ENCODE measurements at regions of chr17 and their contacts with region 1.

Region 1: GRCh38 chr17:46061435-46061834 is 62.4 kb downstream of the STH start:
- DNase-seq: no peak
- ATAC-seq: peak in 1 of 2 donors; percentile 27
- H3K4me3 ChIP-seq: no peak overlapping the region
- H3K27ac ChIP-seq: no peak overlapping the region
- H3K4me1 ChIP-seq: peaks cover 5% of the 10 kb centered on the region
- H3K27me3 ChIP-seq: no peaks in the 10 kb centered on the region

Region 2: GRCh38 chr17:46020023-46020761 is 41.2 kb before region 1 on chr17:
- intact Hi-C with region 1: no loop called
- DNase-seq: no peak
- ATAC-seq: no peak
- H3K4me3 ChIP-seq: no peak overlapping the region
- H3K27ac ChIP-seq: no peak overlapping the region
- H3K4me1 ChIP-seq: no peaks in the 10 kb centered on the region
- H3K27me3 ChIP-seq: no peaks in the 10 kb centered on the region

Region 3: GRCh38 chr17:46097497-46097896 is 36.1 kb after region 1 on chr17:
- intact Hi-C with region 1: no loop called
- DNase-seq: no peak
- ATAC-seq: no peak
- H3K4me3 ChIP-seq: no peak overlapping the region
- H3K27ac ChIP-seq: no peak overlapping the region
- H3K4me1 ChIP-seq: no peaks in the 10 kb centered on the region
- H3K27me3 ChIP-seq: no peaks in the 10 kb centered on the region

Region 4: DNA sequence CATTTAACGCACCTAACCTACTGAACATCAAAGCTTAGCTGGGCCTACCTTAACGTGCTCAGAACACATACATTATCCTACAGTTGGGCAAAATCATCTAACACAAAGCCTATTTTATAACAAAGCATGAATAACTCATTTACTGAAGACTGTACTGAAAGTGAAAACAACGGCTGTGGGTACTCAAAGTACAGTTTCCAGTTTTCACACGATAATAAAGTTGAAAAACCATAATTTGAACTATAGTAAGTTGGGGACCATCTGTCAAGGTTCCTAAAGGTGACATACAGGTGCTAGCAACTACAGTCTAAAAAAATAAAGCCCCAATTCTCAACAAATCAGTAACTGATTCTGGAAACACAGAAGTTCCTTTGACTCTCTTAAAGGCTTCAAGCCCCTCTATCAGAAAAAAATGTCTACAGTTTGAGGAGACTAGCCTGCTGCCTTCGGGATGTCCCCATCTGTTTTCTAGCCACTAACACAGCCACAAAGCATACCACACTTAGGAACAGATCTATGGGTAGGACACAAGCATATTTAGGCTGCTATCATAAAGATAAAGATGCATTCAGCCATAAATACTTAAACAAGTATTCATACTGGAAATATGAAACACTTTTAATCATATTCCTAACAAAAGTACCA is 60.5 kb after region 1 on chr17:
- intact Hi-C with region 1: loop called in 1 of 4 experiments (anchors 10 kb)
- DNase-seq: no peak
- ATAC-seq: no peak
- H3K4me3 ChIP-seq: no peak overlapping the region
- H3K27ac ChIP-seq: no peak overlapping the region
- H3K4me1 ChIP-seq: peaks cover 7% of the 10 kb centered on the region
- H3K27me3 ChIP-seq: no peaks in the 10 kb centered on the region

Region 5: GRCh38 chr17:46193626-46194392 is 132.4 kb after region 1 on chr17:
- intact Hi-C with region 1: loop called in 1 of 4 experiments (anchors 5 kb)
- DNase-seq: peak; percentile 98 to 99 (median 99)
- ATAC-seq: peak; percentile 95 to 97
- H3K4me3 ChIP-seq: peak overlapping the region; percentile 100
- H3K27ac ChIP-seq: peak overlapping the region; percentile 80
- H3K4me1 ChIP-seq: peaks cover 4% of the 10 kb centered on the region
- H3K27me3 ChIP-seq: no peaks in the 10 kb centered on the region